CD4-positive, alpha-beta T cell (primary cell): ENCODE measurements at regions of chr14 and their contacts with region 1.

Region 1: GRCh38 chr14:22168092-22168955 is 420.7 kb downstream of the DAD1 start:
- DNase-seq: peak in 3 of 14 experiments; percentile 29 to 47 (median 30)
- ATAC-seq: peak; percentile 71
- H3K4me3 ChIP-seq: peak overlapping the region; percentile 34
- H3K4me3 Mint-ChIP-seq: peak overlapping the region; percentile 88
- H3K27ac ChIP-seq: no peak overlapping the region
- H3K27ac Mint-ChIP-seq: peak overlapping the region; percentile 87
- H3K4me1 ChIP-seq: no peaks in the 10 kb centered on the region
- H3K4me1 Mint-ChIP-seq: peaks cover 2% of the 10 kb centered on the region
- H3K27me3 ChIP-seq: no peaks in the 10 kb centered on the region
- H3K27me3 Mint-ChIP-seq: no peaks in the 10 kb centered on the region
- CTCF ChIP-seq: no peak

Region 2: DNA sequence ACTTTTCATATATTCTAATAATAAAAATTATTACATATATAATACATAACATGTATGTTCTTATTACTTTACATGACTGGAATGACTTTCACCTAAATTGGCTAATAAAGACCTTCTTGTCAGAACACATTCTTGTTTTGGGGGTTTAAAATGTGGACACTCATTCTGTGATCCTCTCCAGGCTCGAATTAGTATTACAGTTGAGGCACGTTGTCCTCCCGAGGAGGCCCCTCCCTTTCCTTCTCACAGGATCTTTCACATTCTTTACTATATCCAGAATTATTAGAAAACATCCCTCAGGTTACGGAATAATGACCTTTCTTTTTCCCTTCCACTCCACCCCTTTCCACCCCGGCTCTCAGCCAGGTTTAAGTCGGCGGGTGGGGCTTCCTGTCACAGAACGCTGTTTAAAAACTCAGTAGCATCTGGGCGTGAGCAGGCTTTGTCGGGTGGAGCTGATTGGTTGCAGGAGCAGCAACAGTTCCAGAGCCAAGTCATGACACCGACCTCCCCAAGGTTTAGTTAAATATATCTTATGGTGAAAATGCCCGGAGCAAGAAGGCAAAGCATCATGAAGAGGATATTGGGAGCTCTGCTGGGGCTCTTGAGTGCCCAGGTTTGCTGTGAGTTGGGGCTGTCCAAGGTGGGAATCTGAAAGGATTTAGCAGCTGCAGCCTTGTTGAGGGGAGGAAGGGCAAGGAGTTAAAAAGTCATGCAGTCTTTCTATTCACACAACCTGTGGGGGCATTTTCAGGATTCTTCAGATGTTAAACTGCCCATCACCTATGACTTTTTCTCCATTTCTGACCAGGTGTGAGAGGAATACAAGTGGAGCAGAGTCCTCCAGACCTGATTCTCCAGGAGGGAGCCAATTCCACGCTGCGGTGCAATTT is 98.0 kb before region 1 on chr14:
- CTCF ChIA-PET with region 1: no interaction called
- POLR2A ChIA-PET with region 1: no interaction called
- intact Hi-C with region 1: no loop called
- DNase-seq: peak in 13 of 14 experiments; percentile 19 to 80 (median 51)
- ATAC-seq: peak; percentile 80
- H3K4me3 ChIP-seq: peak overlapping the region; percentile 63
- H3K4me3 Mint-ChIP-seq: peak overlapping the region; percentile 97
- H3K27ac ChIP-seq: peak overlapping the region in 1 of 2 donors; percentile 48
- H3K27ac Mint-ChIP-seq: peak overlapping the region; percentile 97
- H3K4me1 ChIP-seq: peaks cover 14% of the 10 kb centered on the region
- H3K4me1 Mint-ChIP-seq: peaks cover 60% of the 10 kb centered on the region
- H3K27me3 ChIP-seq: no peaks in the 10 kb centered on the region
- H3K27me3 Mint-ChIP-seq: no peaks in the 10 kb centered on the region
- CTCF ChIP-seq: no peak

Region 3: GRCh38 chr14:22200977-22201605 is 32.8 kb after region 1 on chr14:
- CTCF ChIA-PET with region 1: interaction called, 6 read pairs
- POLR2A ChIA-PET with region 1: no interaction called
- intact Hi-C with region 1: loop called in 1 of 2 experiments (anchors 5 kb)
- DNase-seq: peak in 3 of 14 experiments; percentile 54 to 66 (median 59)
- ATAC-seq: peak; percentile 90
- H3K4me3 ChIP-seq: no peak overlapping the region
- H3K4me3 Mint-ChIP-seq: peak overlapping the region; percentile 62
- H3K27ac ChIP-seq: no peak overlapping the region
- H3K27ac Mint-ChIP-seq: no peak overlapping the region
- H3K4me1 ChIP-seq: no peaks in the 10 kb centered on the region
- H3K4me1 Mint-ChIP-seq: peaks cover 10% of the 10 kb centered on the region
- H3K27me3 ChIP-seq: no peaks in the 10 kb centered on the region
- H3K27me3 Mint-ChIP-seq: no peaks in the 10 kb centered on the region
- CTCF ChIP-seq: no peak